PC-9 (cell line): ENCODE measurements at regions of chr21 and their contacts with region 1.

Region 1: GRCh38 chr21:20459838-20460237 is 538.4 kb upstream of the NCAM2 start:
- DNase-seq: no peak
- H3K4me3 ChIP-seq: no peak overlapping the region
- H3K27ac ChIP-seq: no peak overlapping the region
- H3K4me1 ChIP-seq: no peaks in the 10 kb centered on the region
- H3K27me3 ChIP-seq: no peaks in the 10 kb centered on the region
- CTCF ChIP-seq: no peak

Region 2: GRCh38 chr21:20292280-20292679 is 167.6 kb before region 1 on chr21:
- CTCF ChIA-PET with region 1: no interaction called
- POLR2A ChIA-PET with region 1: no interaction called
- intact Hi-C with region 1: no loop called
- DNase-seq: no peak
- H3K4me3 ChIP-seq: no peak overlapping the region
- H3K27ac ChIP-seq: no peak overlapping the region
- H3K4me1 ChIP-seq: no peaks in the 10 kb centered on the region
- H3K27me3 ChIP-seq: no peaks in the 10 kb centered on the region
- CTCF ChIP-seq: no peak

Region 3: GRCh38 chr21:20591284-20591683 is 131.4 kb after region 1 on chr21:
- CTCF ChIA-PET with region 1: no interaction called
- POLR2A ChIA-PET with region 1: no interaction called
- intact Hi-C with region 1: no loop called
- DNase-seq: no peak
- H3K4me3 ChIP-seq: no peak overlapping the region
- H3K27ac ChIP-seq: no peak overlapping the region
- H3K4me1 ChIP-seq: no peaks in the 10 kb centered on the region
- H3K27me3 ChIP-seq: no peaks in the 10 kb centered on the region
- CTCF ChIP-seq: no peak

Region 4: GRCh38 chr21:20875742-20876141 is 415.9 kb after region 1 on chr21:
- CTCF ChIA-PET with region 1: no interaction called
- POLR2A ChIA-PET with region 1: no interaction called
- intact Hi-C with region 1: loop called (anchors 10 kb)
- DNase-seq: no peak
- H3K4me3 ChIP-seq: no peak overlapping the region
- H3K27ac ChIP-seq: no peak overlapping the region
- H3K4me1 ChIP-seq: no peaks in the 10 kb centered on the region
- H3K27me3 ChIP-seq: no peaks in the 10 kb centered on the region
- CTCF ChIP-seq: no peak